Uterus (tissue), 4 donors: ENCODE measurements at regions of chr10 and their contacts with region 1.

Region 1: DNA sequence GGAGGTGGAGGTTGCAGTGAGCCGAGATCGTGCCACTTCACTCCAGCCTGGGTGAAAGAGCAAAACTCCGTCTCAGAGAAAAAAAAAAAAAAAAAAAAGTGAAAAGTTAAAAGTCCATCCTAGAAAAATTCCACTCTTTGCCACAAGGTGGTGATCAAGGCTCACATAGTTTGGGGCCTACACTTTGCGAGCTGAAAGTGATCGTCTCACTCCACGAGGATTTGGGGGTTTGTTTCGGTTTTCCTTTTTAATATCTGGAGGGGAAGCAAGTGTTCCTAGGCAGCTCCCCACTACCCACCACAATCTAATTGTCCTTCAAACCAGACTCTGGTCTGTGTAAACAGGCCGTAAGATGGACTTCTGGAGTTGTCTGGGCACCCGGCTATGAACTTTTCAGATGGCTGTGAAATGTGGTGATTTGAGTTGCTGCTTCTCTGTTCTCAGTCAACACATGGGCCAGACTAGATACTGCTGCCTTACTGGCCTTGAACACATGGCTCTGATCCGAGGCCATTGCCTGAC is 27.1 kb downstream of the PRLHR start:
- DNase-seq: peak in 1 of 2 donors; percentile 71
- H3K4me3 ChIP-seq: no peak overlapping the region
- H3K27ac ChIP-seq: peak overlapping the region; percentile 75 to 78
- H3K4me1 ChIP-seq: peaks cover 0 to 9% of the 10 kb centered on the region in 2 donors
- H3K27me3 ChIP-seq: no peaks in the 10 kb centered on the region
- CTCF ChIP-seq: peak; percentile 77 to 81 (median 79)
- POLR2A ChIP-seq: no peak

Region 2: DNA sequence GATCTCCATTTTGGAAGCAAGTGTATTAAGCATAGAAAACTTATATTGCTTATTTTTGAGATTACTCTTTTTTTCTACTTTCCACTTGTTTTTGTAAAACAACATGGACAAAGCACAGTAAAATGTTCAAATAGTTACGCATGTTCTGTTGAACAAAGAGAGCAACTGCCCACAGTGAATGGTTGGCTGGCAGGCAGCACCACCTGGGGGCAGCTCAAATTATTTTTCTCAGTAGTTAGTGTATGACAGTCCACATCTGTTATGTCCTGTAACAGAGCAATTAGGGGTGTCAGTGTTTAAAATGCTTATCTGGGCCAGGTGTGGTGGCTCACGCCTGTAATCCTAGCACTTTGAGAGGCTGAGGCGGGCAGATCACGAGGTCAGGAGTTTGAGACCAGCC is 232.5 kb after region 1 on chr10:
- intact Hi-C with region 1: loop called (anchors 10 kb)
- DNase-seq: peak in 1 of 2 donors; percentile 28
- H3K4me3 ChIP-seq: no peak overlapping the region
- H3K27ac ChIP-seq: no peak overlapping the region
- H3K4me1 ChIP-seq: peaks cover 0 to 4% of the 10 kb centered on the region in 2 donors
- H3K27me3 ChIP-seq: no peaks in the 10 kb centered on the region
- CTCF ChIP-seq: peak; percentile 20 to 45 (median 43)
- POLR2A ChIP-seq: no peak